PC-3 (cell line): ENCODE measurements at regions of chr10 and their contacts with region 1.

Region 1: GRCh38 chr10:64733980-64734379 is 1212.8 kb downstream of the REEP3 start:
- DNase-seq: peak; percentile 86
- ATAC-seq: peak; percentile 84
- H3K4me3 ChIP-seq: no peak overlapping the region
- H3K27ac ChIP-seq: no peak overlapping the region
- H3K4me1 ChIP-seq: peaks cover 11% of the 10 kb centered on the region
- H3K27me3 ChIP-seq: no peaks in the 10 kb centered on the region
- CTCF ChIP-seq: peak; percentile 91

Region 2: DNA sequence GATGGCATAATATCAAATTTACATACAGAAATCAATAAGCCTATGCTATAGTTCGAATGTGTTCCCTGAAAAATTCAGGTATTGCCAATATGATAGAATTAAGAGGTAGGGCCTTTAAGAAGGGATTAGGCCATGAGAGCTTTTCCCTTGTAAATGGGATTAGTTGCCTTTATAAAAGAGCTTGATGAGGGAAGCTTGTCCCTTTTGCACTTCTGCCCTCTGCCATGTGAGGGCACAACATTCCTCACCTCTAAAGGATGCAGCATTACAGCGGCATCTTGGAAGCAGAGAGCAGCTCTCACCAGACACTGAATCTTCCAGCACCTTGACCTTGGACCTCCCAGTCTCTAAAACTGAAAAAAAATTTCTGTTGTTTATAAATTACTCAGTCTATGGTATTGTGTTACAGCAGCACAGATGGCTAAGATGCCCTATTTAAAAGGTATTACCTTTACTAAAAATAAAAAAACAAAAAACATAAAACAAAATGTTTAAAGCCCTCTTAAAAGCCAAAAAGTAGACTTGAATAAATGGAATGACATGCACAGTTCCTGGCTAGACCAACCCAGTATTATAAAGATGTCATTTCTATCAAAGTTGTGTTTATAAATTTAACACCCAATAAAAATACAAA is 303.2 kb before region 1 on chr10:
- CTCF ChIA-PET with region 1: interaction called, 3 read pairs
- POLR2A ChIA-PET with region 1: no interaction called
- intact Hi-C with region 1: loop called (anchors 2 kb)
- DNase-seq: peak; percentile 81
- ATAC-seq: peak; percentile 99
- H3K4me3 ChIP-seq: no peak overlapping the region
- H3K27ac ChIP-seq: no peak overlapping the region
- H3K4me1 ChIP-seq: no peaks in the 10 kb centered on the region
- H3K27me3 ChIP-seq: no peaks in the 10 kb centered on the region
- CTCF ChIP-seq: peak; percentile 88

Region 3: GRCh38 chr10:64535131-64535867 is 198.7 kb before region 1 on chr10:
- CTCF ChIA-PET with region 1: no interaction called
- POLR2A ChIA-PET with region 1: no interaction called
- intact Hi-C with region 1: loop called (anchors 2 kb)
- DNase-seq: no peak
- ATAC-seq: no peak; the same call in 1 of the 2 replicates
- H3K4me3 ChIP-seq: no peak overlapping the region
- H3K27ac ChIP-seq: no peak overlapping the region
- H3K4me1 ChIP-seq: no peaks in the 10 kb centered on the region
- H3K27me3 ChIP-seq: no peaks in the 10 kb centered on the region
- CTCF ChIP-seq: no peak

Region 4: GRCh38 chr10:64658528-64658927 is 75.5 kb before region 1 on chr10:
- CTCF ChIA-PET with region 1: no interaction called
- POLR2A ChIA-PET with region 1: no interaction called
- intact Hi-C with region 1: no loop called
- DNase-seq: peak; percentile 41
- ATAC-seq: peak; percentile 74
- H3K4me3 ChIP-seq: no peak overlapping the region
- H3K27ac ChIP-seq: no peak overlapping the region
- H3K4me1 ChIP-seq: peaks cover 7% of the 10 kb centered on the region; the same call in 1 of the 2 replicates
- H3K27me3 ChIP-seq: no peaks in the 10 kb centered on the region
- CTCF ChIP-seq: no peak

Region 5: DNA sequence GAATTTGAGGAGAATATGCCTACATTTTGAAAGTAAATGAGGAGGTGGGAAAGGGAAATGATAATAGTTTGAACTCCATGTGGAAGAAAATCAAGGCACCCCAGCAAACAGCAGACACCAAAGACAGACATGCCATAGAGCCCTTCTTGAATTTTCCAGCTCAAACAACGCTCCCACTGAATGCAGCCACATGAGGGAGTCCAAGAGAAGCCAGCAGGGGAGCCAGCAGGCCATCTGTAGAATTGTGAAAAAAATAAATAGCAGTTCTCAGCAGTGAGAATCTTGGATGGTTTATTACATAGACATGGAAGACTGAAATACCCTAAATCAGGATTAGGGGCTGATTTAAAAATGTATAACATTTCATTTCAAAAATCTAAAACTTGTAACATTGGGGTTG is 624.6 kb after region 1 on chr10:
- CTCF ChIA-PET with region 1: no interaction called
- POLR2A ChIA-PET with region 1: no interaction called
- intact Hi-C with region 1: loop called (anchors 1 kb)
- DNase-seq: peak; percentile 76
- ATAC-seq: peak; percentile 94
- H3K4me3 ChIP-seq: no peak overlapping the region
- H3K27ac ChIP-seq: no peak overlapping the region
- H3K4me1 ChIP-seq: no peaks in the 10 kb centered on the region
- H3K27me3 ChIP-seq: no peaks in the 10 kb centered on the region
- CTCF ChIP-seq: peak; percentile 96

Region 6: DNA sequence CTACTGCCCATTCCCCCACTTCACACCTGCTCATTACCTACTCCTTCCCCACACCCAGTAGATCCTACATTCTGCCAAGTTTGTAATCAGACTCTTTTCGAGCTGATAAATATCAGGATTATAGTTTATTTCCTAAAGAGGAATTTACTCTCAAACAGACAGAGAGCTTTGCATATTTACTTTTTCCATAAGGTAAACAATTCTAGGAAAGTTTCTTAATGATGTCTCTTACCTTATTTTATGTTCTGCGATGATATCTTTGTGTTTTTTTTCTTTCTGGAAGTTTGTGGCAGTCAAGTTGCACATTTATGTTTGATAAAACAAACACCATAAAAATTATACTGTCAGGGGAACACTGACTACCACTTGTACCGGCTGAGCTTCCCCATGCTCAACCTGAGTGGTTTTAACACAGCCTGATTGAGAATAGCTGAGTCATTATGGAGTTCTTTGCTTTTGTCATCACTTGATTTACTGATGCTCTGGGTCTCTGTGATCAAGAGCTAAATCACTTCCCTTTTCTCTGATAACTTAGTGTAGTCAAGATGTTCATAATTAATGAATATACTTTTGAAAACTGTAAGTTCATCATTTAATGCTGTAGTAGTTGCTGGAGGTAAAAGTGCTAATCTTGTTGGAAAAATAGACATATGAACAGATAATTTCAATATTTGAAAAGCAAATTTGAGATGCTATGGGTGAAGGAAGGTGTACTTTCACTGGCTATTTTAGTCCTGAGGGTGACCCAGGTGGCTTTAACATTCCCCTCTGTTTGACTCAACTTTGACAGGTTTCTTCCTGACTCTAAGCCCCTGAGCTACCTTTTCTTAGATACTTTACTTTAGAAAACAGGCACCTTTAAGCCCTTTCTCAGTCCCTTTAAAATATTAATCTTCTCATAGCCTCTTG is 1157.3 kb after region 1 on chr10:
- CTCF ChIA-PET with region 1: no interaction called
- POLR2A ChIA-PET with region 1: no interaction called
- intact Hi-C with region 1: loop called (anchors 5 kb)
- DNase-seq: peak; percentile 90
- ATAC-seq: peak; percentile 98
- H3K4me3 ChIP-seq: peak overlapping the region; percentile 6; the same call in 1 of the 2 replicates
- H3K27ac ChIP-seq: peak overlapping the region; percentile 74
- H3K4me1 ChIP-seq: peaks cover 21% of the 10 kb centered on the region
- H3K27me3 ChIP-seq: no peaks in the 10 kb centered on the region
- CTCF ChIP-seq: no peak